HEK293 (cell line): ENCODE measurements at regions of chr17 and their contacts with region 1.

Region 1: DNA sequence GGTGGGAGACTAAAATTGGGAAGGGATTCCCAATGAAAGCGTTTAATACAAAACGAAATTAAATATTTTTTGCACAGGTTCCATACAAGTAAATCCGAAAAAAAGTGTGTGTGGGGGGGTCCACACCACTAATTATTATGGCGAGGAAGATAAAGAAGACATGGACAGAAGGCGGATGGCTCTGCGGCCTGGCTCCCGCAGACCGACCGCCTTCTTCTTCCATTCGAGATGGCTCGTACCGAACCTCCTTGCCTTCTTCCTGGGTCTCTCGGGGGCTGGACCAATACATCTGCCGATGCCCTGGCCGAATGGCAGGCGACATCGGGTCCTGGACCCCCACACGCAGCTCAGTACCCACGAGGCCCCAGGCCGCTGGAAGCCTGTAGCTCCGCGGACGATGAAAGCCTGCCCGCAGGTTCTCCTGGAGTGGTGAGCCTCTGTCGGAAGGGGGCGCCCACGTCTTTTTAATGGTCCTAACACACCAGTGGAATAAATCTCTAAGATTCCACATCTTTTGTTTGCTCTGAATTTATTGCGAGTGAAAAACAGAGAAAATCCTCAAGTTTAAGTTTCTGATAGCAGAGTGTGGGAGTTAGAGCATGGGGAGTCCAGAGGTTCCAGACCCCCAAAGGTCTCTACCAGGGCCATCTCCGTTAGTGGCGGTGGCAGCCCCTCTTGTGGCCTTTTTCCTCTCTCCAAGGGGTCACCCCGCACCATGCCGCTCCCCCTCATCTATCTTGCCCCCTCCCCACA is 1.4 kb downstream of the PRAC2 start:
- H3K4me3 ChIP-seq: no peak overlapping the region
- H3K27ac ChIP-seq: no peak overlapping the region
- H3K4me1 ChIP-seq: peaks cover 3% of the 10 kb centered on the region
- CTCF ChIP-seq: peak; percentile 56

Region 2: GRCh38 chr17:48711102-48711501 is 13.3 kb before region 1 on chr17:
- CTCF ChIA-PET with region 1: interaction called, 16 read pairs
- POLR2A ChIA-PET with region 1: no interaction called
- H3K4me3 ChIP-seq: no peak overlapping the region
- H3K27ac ChIP-seq: no peak overlapping the region
- H3K4me1 ChIP-seq: no peaks in the 10 kb centered on the region
- CTCF ChIP-seq: no peak

Region 3: DNA sequence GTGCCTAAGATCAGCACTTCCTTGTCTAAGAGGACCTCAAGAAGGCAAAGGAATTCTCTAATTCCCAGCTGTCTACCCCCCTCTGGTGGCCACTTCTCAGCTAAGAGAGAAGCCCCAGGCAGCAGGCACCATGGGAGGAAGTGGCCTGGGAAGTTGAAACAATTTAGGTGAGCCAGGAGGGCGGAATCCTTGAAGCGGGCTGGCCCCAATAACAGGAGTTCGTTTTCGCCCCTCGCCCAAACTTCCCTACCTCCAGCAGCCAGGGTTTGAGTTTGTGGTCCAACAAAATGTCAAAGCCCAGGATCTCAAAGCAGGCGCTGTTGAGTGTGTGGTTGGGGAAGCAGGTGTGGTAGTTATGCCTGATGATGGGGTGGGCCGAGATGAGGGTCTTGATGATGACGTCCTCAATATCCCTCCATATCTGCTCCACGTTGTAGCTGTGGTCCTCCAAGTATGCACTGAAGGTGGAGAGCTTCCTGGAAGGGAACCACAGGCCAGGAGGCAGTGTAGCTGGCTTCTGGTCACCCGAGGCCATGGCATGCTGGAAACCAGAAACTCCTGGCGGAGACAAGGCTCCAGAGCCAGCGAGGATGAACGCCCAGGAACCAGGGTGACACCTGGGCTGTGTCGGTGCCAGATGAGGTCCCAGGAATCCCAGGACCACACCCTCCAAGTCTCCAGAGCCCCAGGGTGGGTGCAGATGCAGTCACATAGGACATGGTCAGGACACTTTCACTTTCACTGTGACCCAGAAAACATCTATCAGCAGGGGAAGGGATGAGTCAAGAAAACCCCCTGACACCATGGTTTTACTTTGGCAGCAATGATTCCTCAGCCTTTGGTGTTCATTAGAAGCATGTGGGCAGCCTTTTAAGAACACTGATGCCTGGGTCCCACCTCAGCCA is 67.0 kb after region 1 on chr17:
- CTCF ChIA-PET with region 1: interaction called, 246 read pairs
- POLR2A ChIA-PET with region 1: interaction called, 8 read pairs
- H3K4me3 ChIP-seq: no peak overlapping the region
- H3K27ac ChIP-seq: no peak overlapping the region
- H3K4me1 ChIP-seq: no peaks in the 10 kb centered on the region
- CTCF ChIP-seq: peak; percentile 70; the same call in 1 of the 2 replicates

Region 4: DNA sequence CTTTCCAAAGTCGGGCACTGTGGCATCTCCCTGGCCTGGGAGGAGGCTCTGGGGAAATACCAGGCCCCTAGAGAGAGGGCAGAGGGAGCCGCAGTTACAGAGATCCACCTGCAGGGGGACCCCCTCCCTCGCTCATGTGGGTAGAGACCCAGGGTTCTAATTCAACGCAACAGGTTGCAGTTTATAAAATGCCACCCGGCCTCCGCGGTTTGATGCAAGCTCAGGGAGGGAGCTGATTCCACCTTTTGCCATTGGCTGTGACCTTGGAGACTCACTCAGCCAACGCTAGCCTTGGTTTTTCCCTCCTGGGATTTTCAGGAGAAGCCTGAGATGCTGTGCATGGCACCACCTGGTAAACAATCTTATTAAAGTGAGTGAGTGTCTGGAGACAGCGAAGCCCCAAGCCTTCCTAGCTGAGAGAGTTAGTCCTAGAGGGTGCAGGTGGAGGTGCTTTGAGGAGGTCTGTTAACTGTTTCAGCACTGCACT is 80.5 kb after region 1 on chr17:
- CTCF ChIA-PET with region 1: interaction called, 32 read pairs
- POLR2A ChIA-PET with region 1: no interaction called
- H3K4me3 ChIP-seq: no peak overlapping the region
- H3K27ac ChIP-seq: no peak overlapping the region
- H3K4me1 ChIP-seq: peaks cover 4% of the 10 kb centered on the region
- CTCF ChIP-seq: peak; percentile 76

Region 5: GRCh38 chr17:48871551-48872351 is 147.3 kb after region 1 on chr17:
- CTCF ChIA-PET with region 1: interaction called, 66 read pairs
- POLR2A ChIA-PET with region 1: no interaction called
- H3K4me3 ChIP-seq: no peak overlapping the region
- H3K27ac ChIP-seq: no peak overlapping the region
- H3K4me1 ChIP-seq: no peaks in the 10 kb centered on the region
- CTCF ChIP-seq: no peak

Region 6: GRCh38 chr17:49022391-49022941 is 298.0 kb after region 1 on chr17:
- CTCF ChIA-PET with region 1: no interaction called
- POLR2A ChIA-PET with region 1: no interaction called
- H3K4me3 ChIP-seq: no peak overlapping the region
- H3K27ac ChIP-seq: 0 out of 2 replicates have a peak overlapping the region, but pooled peaks have one; percentile 24
- H3K4me1 ChIP-seq: peaks cover 28% of the 10 kb centered on the region
- CTCF ChIP-seq: no peak